CD8-positive, alpha-beta T cell (primary cell): ENCODE measurements at regions of chr10 and their contacts with region 1.

Region 1: DNA sequence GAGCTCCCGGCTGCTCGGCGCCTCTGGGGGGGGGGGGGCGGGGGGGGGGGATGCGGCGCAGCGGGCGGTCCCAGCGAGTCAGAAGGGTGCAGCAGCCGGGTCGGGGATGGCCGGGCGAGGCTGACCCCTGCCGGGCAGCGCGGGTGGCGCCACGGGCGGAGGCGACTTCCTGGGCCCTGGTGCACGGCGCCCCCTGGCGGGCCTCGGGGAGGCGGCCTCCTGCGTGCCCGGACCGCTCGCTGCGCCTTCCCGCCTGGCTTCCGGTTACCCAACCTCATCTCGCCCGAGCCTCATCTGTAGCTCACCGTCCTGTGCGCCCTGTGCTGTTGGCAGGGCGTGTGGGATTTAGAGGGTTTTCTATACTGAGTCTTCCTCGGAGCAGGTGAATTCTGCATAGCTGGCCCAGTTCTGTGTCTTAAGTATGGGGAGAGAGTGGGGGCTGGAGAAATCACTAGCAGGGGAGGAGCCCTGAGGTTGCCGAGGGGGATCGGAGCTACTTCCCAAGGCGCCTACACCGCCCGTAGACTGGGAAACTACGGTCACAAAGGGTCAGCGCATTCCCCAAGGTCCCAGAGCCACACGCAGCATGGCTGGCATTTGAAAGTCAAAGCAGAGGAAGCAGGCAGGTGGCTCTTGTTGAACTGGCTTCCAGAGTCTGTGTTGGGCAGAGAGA is 28.3 kb upstream of the WDFY4 start:
- DNase-seq: peak; percentile 64 to 88 (median 79)
- ATAC-seq: peak; percentile 92
- H3K4me3 ChIP-seq: peak overlapping the region; percentile 30 to 48
- H3K4me3 Mint-ChIP-seq: peak overlapping the region; percentile 79
- H3K27ac ChIP-seq: no peak overlapping the region
- H3K27ac Mint-ChIP-seq: no peak overlapping the region
- H3K4me1 ChIP-seq: peaks cover 12% of the 10 kb centered on the region
- H3K4me1 Mint-ChIP-seq: peaks cover 6% of the 10 kb centered on the region
- H3K27me3 ChIP-seq: peaks cover 0 to 9% of the 10 kb centered on the region in 2 experiments
- H3K27me3 Mint-ChIP-seq: peaks cover 30% of the 10 kb centered on the region
- CTCF ChIP-seq: peak; percentile 81

Region 2: DNA sequence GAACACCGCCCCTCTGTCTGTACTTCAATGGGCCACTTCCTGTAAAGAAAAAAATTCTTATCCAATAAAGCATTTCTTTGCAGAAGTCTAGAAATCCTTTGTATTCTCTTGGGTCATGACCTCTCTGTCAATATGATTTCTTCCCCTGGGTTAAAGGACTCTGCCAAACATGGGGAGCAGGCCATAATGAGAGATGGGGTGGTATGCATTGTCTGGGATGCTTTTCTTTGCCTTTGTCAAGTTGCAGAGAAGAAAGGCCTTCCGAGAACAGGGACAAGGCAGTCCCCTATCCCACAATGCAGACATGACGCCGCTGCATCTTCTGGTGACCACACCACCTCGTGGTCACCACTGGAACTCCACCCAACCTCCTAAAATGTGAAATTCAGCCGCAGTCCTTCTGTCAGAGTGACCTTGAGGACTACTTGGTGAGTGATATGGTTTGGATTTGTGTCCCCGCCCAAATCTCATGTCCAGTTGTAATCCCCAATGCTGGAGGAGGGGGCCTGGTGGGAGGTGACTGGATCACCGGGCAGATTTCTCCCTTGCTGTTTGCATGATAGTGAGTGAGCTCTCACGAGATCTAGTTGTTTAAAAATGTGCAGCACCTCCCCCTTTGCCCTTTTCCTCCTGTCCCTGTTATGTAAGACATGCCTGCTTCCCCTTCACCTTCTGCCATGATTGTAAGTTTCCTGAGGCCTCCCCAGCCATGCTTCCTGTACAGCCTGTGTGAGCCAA is 366.7 kb before region 1 on chr10:
- CTCF ChIA-PET with region 1: no interaction called
- POLR2A ChIA-PET with region 1: no interaction called
- intact Hi-C with region 1: loop called in 1 of 2 experiments (anchors 10 kb)
- DNase-seq: peak in 8 of 9 experiments; percentile 18 to 61 (median 40)
- ATAC-seq: peak; percentile 68
- H3K4me3 ChIP-seq: no peak overlapping the region
- H3K4me3 Mint-ChIP-seq: no peak overlapping the region
- H3K27ac ChIP-seq: no peak overlapping the region
- H3K27ac Mint-ChIP-seq: no peak overlapping the region
- H3K4me1 ChIP-seq: no peaks in the 10 kb centered on the region
- H3K4me1 Mint-ChIP-seq: peaks cover 6% of the 10 kb centered on the region
- H3K27me3 ChIP-seq: no peaks in the 10 kb centered on the region
- H3K27me3 Mint-ChIP-seq: peaks cover 18% of the 10 kb centered on the region
- CTCF ChIP-seq: peak; percentile 70

Region 3: DNA sequence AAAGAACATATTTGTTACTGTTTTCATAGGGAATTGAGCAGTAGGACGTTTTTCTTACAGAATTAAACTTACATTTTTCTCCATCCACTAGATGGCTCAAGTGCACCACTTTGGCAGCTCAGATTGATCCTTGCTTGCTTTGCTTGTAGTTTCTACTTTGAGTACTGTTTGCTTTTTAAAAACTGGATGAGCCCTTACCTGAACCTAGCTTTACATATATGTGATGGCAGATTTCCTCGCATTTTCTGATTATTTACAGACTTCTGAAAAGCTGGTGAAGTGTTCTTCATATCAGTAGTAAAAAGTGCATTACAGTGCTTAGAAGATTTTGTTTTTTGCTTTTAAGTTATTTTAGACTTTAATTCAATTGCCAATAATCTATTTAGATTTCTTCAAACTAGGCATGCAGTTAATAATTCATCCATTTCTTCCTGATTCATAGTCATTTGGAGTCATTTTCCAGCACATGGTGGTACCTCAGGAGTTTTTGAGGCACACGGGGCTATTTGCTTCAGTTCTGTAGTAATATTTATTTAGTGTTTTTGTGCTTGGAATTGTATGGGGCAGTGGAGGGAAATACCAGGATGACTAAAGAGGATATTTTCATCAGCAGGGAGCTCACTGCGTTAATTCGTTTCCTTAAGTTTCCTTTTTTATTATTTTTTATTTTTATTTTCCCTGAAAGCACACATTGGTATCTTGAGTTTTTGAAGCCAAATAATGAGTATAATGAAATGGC is 292.6 kb before region 1 on chr10:
- CTCF ChIA-PET with region 1: interaction called, 22 read pairs
- POLR2A ChIA-PET with region 1: no interaction called
- intact Hi-C with region 1: loop called (anchors 1 to 2 kb)
- DNase-seq: peak in 4 of 9 experiments; percentile 13 to 59 (median 34)
- ATAC-seq: peak; percentile 31
- H3K4me3 ChIP-seq: no peak overlapping the region
- H3K4me3 Mint-ChIP-seq: no peak overlapping the region
- H3K27ac ChIP-seq: no peak overlapping the region
- H3K27ac Mint-ChIP-seq: no peak overlapping the region
- H3K4me1 ChIP-seq: no peaks in the 10 kb centered on the region
- H3K4me1 Mint-ChIP-seq: peaks cover 42% of the 10 kb centered on the region
- H3K27me3 ChIP-seq: no peaks in the 10 kb centered on the region
- H3K27me3 Mint-ChIP-seq: no peaks in the 10 kb centered on the region
- CTCF ChIP-seq: peak; percentile 67

Region 4: GRCh38 chr10:48634198-48634983 is 22.0 kb before region 1 on chr10:
- CTCF ChIA-PET with region 1: interaction called, 13 read pairs
- POLR2A ChIA-PET with region 1: no interaction called
- intact Hi-C with region 1: no loop called
- DNase-seq: peak in 5 of 9 experiments; percentile 17 to 39 (median 24)
- ATAC-seq: no peak
- H3K4me3 ChIP-seq: no peak overlapping the region
- H3K4me3 Mint-ChIP-seq: no peak overlapping the region
- H3K27ac ChIP-seq: no peak overlapping the region
- H3K27ac Mint-ChIP-seq: peak overlapping the region; percentile 63
- H3K4me1 ChIP-seq: peaks cover 11% of the 10 kb centered on the region
- H3K4me1 Mint-ChIP-seq: peaks cover 11% of the 10 kb centered on the region
- H3K27me3 ChIP-seq: peaks cover 0 to 2% of the 10 kb centered on the region in 2 experiments
- H3K27me3 Mint-ChIP-seq: peaks cover 28% of the 10 kb centered on the region
- CTCF ChIP-seq: no peak

Region 5: GRCh38 chr10:48804740-48805182 is 148.4 kb after region 1 on chr10:
- CTCF ChIA-PET with region 1: no interaction called
- POLR2A ChIA-PET with region 1: no interaction called
- intact Hi-C with region 1: no loop called
- DNase-seq: peak in 1 of 9 experiments; percentile 28
- ATAC-seq: no peak
- H3K4me3 ChIP-seq: no peak overlapping the region
- H3K4me3 Mint-ChIP-seq: peak overlapping the region; percentile 15
- H3K27ac ChIP-seq: no peak overlapping the region
- H3K27ac Mint-ChIP-seq: no peak overlapping the region
- H3K4me1 ChIP-seq: peaks cover 51% of the 10 kb centered on the region
- H3K4me1 Mint-ChIP-seq: peaks cover 43% of the 10 kb centered on the region
- H3K27me3 ChIP-seq: no peaks in the 10 kb centered on the region
- H3K27me3 Mint-ChIP-seq: peaks cover 3% of the 10 kb centered on the region
- CTCF ChIP-seq: no peak

Region 6: GRCh38 chr10:49518982-49519578 is 862.7 kb after region 1 on chr10:
- CTCF ChIA-PET with region 1: interaction called, 4 read pairs
- POLR2A ChIA-PET with region 1: no interaction called
- intact Hi-C with region 1: loop called in 1 of 2 experiments (anchors 2 kb)
- DNase-seq: peak in 3 of 9 experiments; percentile 28 to 65 (median 54)
- ATAC-seq: peak; percentile 79
- H3K4me3 ChIP-seq: no peak overlapping the region
- H3K4me3 Mint-ChIP-seq: no peak overlapping the region
- H3K27ac ChIP-seq: no peak overlapping the region
- H3K27ac Mint-ChIP-seq: no peak overlapping the region
- H3K4me1 ChIP-seq: no peaks in the 10 kb centered on the region
- H3K4me1 Mint-ChIP-seq: peaks cover 5% of the 10 kb centered on the region
- H3K27me3 ChIP-seq: no peaks in the 10 kb centered on the region
- H3K27me3 Mint-ChIP-seq: no peaks in the 10 kb centered on the region
- CTCF ChIP-seq: peak; percentile 69